ENCODE measurements at regions of chr12 and their contacts with region 1.

Region 1: GRCh38 chr12:1804545-1805332 is 15.6 kb upstream of the LRTM2 start:
- DNase-seq: peak; percentile 84 to 87 (median 85)
- ATAC-seq: peak; percentile 87 to 94 (median 89)
- H3K4me3 ChIP-seq: no peak overlapping the region
- H3K27ac ChIP-seq: no peak overlapping the region
- H3K4me1 ChIP-seq: no peaks in the 10 kb centered on the region
- H3K27me3 ChIP-seq: no peaks in the 10 kb centered on the region
- CTCF ChIP-seq: no peak
- POLR2A ChIP-seq: no peak

Region 2: GRCh38 chr12:1927751-1928351 is 123.1 kb after region 1 on chr12:
- intact Hi-C with region 1: loop called in 1 of 2 experiments (anchors 5 kb)
- DNase-seq: peak in 1 of 3 donors; percentile 33
- ATAC-seq: no peak
- H3K4me3 ChIP-seq: no peak overlapping the region
- H3K27ac ChIP-seq: no peak overlapping the region
- H3K4me1 ChIP-seq: no peaks in the 10 kb centered on the region
- H3K27me3 ChIP-seq: no peaks in the 10 kb centered on the region
- CTCF ChIP-seq: no peak
- POLR2A ChIP-seq: no peak

Region 3: DNA sequence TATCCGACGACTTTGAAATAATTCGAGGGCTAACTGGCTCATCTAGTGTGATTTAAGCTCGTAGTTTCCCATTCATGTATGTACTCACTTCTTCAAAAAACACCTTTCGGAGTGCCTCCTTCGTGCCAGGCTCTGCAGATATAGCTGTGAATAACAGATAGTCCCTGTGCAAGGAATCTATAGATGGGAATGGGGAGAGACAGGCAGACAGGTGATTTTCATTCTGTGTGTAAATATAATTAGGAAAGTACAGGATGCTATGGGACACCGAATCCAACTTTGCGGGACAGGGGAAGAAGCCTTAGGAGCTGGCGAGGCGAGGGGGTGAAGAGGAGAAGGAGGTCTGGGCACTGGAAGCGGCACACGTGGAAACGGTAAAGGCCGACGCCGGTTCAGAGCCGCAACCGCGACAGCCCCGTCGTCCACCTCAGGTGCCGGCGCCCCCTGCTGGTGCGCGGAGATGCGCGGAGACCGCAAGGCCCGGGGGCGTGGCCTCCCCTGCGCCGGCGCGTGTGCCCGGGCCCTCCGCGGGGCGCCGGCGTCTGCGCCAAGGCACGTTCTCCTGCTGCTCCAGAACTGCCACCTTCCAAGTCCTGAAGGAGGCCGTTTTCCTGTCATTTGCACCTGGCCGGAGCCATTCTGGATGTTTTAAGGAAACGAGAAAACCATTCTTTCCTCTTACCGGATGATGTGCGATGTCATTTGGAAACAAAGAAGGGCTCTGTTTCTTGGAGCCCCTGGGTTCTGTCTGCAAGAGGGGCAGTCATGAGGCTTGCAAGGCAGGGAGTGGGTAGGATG is 230.1 kb after region 1 on chr12:
- intact Hi-C with region 1: loop called (anchors 10 kb)
- DNase-seq: peak; percentile 90 to 91 (median 90)
- ATAC-seq: peak; percentile 99 to 100 (median 100)
- H3K4me3 ChIP-seq: peak overlapping the region; percentile 30 to 48 (median 31)
- H3K27ac ChIP-seq: no peak overlapping the region
- H3K4me1 ChIP-seq: peaks cover 0 to 5% (median 0%) of the 10 kb centered on the region in 4 donors
- H3K27me3 ChIP-seq: no peaks in the 10 kb centered on the region
- CTCF ChIP-seq: peak; percentile 96 to 99 (median 96)
- POLR2A ChIP-seq: no peak

Measured in right lobe of liver (tissue), 6 donors.